ENCODE measurements at regions of chr11 and their contacts with region 1.

Region 1: DNA sequence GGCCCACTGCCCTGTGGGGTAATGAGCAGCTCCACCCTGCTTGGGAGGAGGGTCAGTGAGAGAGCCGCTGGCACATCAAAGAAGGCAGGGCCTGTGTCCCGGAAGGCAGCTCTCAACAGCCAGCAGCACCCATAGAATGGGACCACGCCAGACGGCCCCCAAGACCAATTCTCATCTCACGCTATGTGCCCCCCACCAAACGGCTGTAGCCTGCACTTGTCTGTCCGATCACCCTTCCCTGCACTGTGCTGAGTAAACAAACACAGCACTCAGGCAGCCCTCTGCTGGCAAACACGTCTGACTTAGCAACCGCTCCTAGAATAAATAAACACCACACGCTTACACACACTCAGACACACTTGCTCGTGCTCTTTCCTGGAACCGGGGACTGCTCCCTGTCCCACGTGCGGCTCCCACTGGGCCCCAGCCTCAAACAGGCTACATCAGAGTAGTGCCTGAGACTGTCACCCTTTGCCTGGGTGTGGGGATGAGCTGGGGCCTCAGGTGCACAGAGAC is 53.2 kb upstream of the CDON start:
- DNase-seq: no peak
- H3K4me3 ChIP-seq: no peak overlapping the region
- H3K27ac ChIP-seq: no peak overlapping the region; the same call in 1 of the 2 replicates
- H3K4me1 ChIP-seq: peaks cover 0 to 7% (median 0%) of the 10 kb centered on the region in 4 experiments; a peak in 3 of 7 replicates
- H3K27me3 ChIP-seq: 0 out of 7 replicates have a peak, but pooled peaks cover 0 to 3% (median 0%) of the 10 kb centered on the region in 4 experiments
- CTCF ChIP-seq: peak in 2 of 3 experiments; percentile 8 to 20; a peak in 2 of 4 replicates
- EP300 ChIP-seq: no peak
- POLR2A ChIP-seq: no peak
- RAD21 ChIP-seq: peak in 1 of 2 experiments; percentile 16; a peak in 2 of 4 replicates

Region 2: DNA sequence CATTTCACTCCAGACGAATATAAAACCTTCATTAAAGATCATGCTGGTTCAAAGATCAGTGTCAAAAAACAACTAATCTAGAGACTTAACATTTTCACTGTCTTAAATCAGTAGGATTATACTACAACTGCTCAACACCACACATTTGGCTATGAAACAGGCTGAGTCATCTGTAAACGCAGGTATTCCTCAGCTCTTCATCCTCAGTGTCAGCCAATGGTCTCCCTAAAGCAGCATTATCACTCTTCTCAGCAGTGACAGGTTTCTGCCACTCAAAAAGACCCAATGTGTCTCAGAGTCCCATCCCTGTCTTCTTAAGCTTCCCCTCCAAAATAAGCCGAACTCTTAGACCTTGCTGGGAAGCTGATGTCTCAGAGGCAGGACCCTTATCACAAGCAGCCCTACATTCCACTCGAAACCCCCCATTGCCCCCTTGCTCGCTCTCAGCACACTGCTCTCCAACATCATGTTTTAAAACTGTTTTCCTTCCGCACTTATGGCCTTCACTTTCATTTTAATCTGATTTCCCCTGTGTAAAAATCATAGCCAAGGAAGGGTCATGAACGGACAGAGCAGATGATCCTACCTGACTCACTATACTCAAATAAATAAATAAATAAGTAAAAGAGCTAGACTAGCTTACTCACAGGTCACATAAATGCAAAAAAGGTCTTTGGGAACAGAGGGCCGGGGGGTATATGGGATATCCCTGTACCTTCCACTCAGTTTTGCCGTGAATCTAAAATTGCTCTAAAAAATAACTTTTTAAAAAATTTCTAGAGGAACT is 76.2 kb before region 1 on chr11:
- CTCF ChIA-PET with region 1: no interaction called
- POLR2A ChIA-PET with region 1: no interaction called
- DNase-seq: no peak
- H3K4me3 ChIP-seq: no peak overlapping the region
- H3K27ac ChIP-seq: no peak overlapping the region
- H3K4me1 ChIP-seq: peaks cover 0 to 4% (median 0%) of the 10 kb centered on the region in 4 experiments; a peak in 1 of 7 replicates
- H3K27me3 ChIP-seq: no peaks in the 10 kb centered on the region
- CTCF ChIP-seq: no peak
- EP300 ChIP-seq: no peak
- POLR2A ChIP-seq: no peak
- RAD21 ChIP-seq: no peak

Region 3: DNA sequence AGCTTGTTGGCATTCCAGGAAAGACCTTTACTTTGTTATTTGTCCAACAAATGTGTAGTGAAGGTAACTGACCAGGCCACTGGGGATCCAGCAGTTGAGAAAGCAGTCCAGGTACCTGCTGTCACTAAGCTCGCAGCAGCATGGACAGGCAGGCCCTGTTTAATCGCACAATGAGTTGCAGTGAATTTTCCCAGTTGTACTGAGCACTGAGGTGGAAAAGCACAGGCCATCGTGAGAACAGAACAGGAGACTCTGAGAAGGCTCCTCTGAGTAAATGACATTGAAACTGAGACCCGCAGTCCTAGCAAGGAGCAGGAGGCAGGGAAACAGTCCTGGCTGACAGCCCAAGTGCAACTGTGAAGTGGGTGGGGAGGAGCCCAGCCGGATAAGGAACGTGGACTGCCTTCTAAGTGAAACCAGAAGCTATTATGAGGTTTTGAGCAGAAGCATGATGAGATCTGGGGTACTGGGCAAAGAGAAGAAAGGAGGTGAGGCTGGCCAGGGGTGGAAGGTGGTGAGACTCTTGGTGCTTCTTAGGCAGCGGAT is 13.4 kb before region 1 on chr11:
- CTCF ChIA-PET with region 1: interaction called, 42 read pairs
- POLR2A ChIA-PET with region 1: interaction called, 6 read pairs
- DNase-seq: no peak
- H3K4me3 ChIP-seq: no peak overlapping the region
- H3K27ac ChIP-seq: no peak overlapping the region
- H3K4me1 ChIP-seq: peaks cover 7 to 35% (median 18%) of the 10 kb centered on the region in 4 experiments
- H3K27me3 ChIP-seq: no peaks in the 10 kb centered on the region; a peak in 1 of 7 replicates
- CTCF ChIP-seq: no peak
- EP300 ChIP-seq: no peak
- POLR2A ChIP-seq: no peak
- RAD21 ChIP-seq: no peak

Region 4: GRCh38 chr11:126186708-126187529 is 71.0 kb after region 1 on chr11:
- CTCF ChIA-PET with region 1: interaction called, 18 read pairs
- POLR2A ChIA-PET with region 1: no interaction called
- DNase-seq: no peak
- H3K4me3 ChIP-seq: no peak overlapping the region
- H3K27ac ChIP-seq: no peak overlapping the region
- H3K4me1 ChIP-seq: peaks cover 0 to 2% (median 0%) of the 10 kb centered on the region in 4 experiments; a peak in 1 of 7 replicates
- H3K27me3 ChIP-seq: no peaks in the 10 kb centered on the region
- CTCF ChIP-seq: peak; percentile 25 to 45 (median 32)
- EP300 ChIP-seq: no peak
- POLR2A ChIP-seq: no peak
- RAD21 ChIP-seq: peak; percentile 56 to 63

Region 5: DNA sequence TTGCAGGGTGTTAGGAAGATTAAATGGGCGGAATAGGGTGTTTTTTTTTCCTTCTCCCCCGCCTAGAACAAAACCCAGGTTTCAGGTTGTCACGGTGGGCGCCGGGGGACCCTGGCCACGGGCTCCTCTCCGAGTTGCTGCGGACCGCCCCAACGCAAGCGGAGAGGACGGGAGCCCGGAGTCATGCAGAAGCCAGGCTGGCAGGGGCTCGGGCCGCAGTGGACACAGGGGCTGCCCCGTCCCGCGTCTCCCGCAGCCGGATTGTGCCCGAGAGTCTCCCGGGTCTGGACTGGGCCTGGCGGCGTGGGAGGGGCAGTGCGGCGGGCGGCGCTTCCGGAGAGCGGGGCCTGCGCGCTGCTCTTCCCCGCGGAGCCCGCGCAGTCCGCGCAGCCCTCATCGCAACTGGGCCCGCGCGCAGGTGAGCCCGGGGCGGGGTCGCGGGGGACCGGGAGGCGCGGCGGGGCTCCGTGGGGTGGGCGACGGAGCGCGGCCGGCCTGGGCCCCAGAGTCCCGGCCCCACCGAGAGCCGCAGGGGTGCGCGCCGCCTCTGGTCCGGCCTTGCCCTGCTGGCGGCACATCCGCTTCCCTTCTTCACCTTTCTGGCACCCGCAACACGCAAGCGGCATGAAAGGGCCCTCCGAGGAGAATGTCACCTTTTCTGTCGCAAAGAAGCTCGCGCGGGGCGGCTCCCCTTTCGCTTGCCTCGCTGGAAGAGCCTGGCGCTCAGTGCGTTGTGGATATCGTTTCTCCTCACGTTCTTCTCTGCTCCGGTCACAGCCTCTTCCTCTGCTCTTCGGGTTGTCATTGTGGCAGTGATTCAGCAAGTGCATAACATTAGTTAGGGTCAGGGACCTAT is 167.1 kb after region 1 on chr11 and contains the start of gene TIRAP:
- CTCF ChIA-PET with region 1: no interaction called
- POLR2A ChIA-PET with region 1: no interaction called
- DNase-seq: peak in 1 of 2 experiments; percentile 79
- H3K4me3 ChIP-seq: peak within 1 kb of the TSS; percentile 46 to 91 (median 83)
- H3K27ac ChIP-seq: no peak within 1 kb of the TSS
- H3K4me1 ChIP-seq: peaks cover 0 to 6% (median 4%) of the 10 kb centered on the region in 4 experiments; a peak in 4 of 7 replicates
- H3K27me3 ChIP-seq: peaks cover 0 to 5% (median 2%) of the 10 kb centered on the region in 4 experiments; a peak in 4 of 7 replicates
- CTCF ChIP-seq: peak in 1 of 3 experiments; percentile 16; a peak in 1 of 4 replicates
- EP300 ChIP-seq: no peak
- POLR2A ChIP-seq: peak in 1 of 2 experiments; percentile 66; a peak in 2 of 3 replicates
- RAD21 ChIP-seq: no peak
- total RNA-seq, gene TIRAP: 4.5 and 5.3 TPM in 2 replicates